Right ventricle myocardium superior (tissue), 1 donor: ENCODE measurements at regions of chr2 and their contacts with region 1.

Region 1: GRCh38 chr2:121649596-121650314 is 493 bp upstream of the CLASP1 start:
- DNase-seq: peak; percentile 98
- ATAC-seq: peak; percentile 98

Region 2: GRCh38 chr2:121530212-121530705 is 119.5 kb before region 1 on chr2:
- intact Hi-C with region 1: loop called (anchors 5 kb)
- DNase-seq: peak; percentile 90
- ATAC-seq: peak; percentile 90